ENCODE measurements at regions of chr5 and their contacts with region 1.

Region 1: GRCh38 chr5:57137401-57137800 is 36.5 kb upstream of the GPBP1 start:
- DNase-seq: no peak
- ATAC-seq: no peak
- H3K4me3 ChIP-seq: no peak overlapping the region
- H3K4me3 Mint-ChIP-seq: no peak overlapping the region
- H3K27ac ChIP-seq: no peak overlapping the region
- H3K27ac Mint-ChIP-seq: peak overlapping the region in 1 of 9 donors; percentile 4
- H3K4me1 ChIP-seq: no peaks in the 10 kb centered on the region
- H3K4me1 Mint-ChIP-seq: no peaks in the 10 kb centered on the region
- H3K27me3 ChIP-seq: no peaks in the 10 kb centered on the region
- H3K27me3 Mint-ChIP-seq: peaks cover 0 to 41% (median 0%) of the 10 kb centered on the region in 5 donors

Region 2: DNA sequence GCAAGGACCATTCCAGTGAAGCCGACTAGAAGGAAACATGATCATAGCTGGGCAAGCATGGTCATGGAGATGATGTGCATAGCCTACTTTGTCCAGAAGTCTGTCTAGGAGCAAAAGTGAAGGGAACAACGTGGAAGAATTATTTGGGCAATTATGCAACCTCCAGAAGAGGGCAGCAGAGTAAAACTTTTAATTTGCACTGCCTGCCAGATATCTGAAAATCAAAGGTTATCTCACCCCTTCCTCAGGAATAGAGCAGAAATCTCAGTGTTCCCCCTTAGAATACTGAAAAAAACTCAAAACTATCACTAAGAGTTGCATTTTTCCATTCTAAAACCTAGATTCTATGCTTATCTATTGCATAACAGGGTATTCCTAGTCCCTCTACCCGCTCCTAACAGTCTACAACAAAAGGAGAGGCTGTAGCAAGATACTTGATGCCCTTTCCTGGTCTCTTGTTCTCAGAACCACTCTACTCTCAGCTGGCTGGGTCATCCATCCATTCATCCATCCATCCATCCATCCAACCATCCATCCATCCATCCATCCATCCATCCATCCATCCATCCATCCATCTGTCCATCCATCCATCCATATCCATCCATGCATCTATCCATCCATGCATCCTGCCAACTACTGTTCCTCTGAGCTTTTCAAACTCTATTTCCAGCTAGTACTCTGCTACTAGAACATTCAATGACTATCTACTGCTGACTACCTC is 236.4 kb before region 1 on chr5:
- CTCF ChIA-PET with region 1: interaction called, 17 read pairs
- POLR2A ChIA-PET with region 1: interaction called, 3 read pairs
- intact Hi-C with region 1: loop called (anchors 1 kb)
- DNase-seq: peak in 7 of 9 donors; percentile 20 to 62 (median 51)
- ATAC-seq: peak; percentile 81
- H3K4me3 ChIP-seq: no peak overlapping the region
- H3K4me3 Mint-ChIP-seq: no peak overlapping the region
- H3K27ac ChIP-seq: no peak overlapping the region
- H3K27ac Mint-ChIP-seq: no peak overlapping the region
- H3K4me1 ChIP-seq: no peaks in the 10 kb centered on the region
- H3K4me1 Mint-ChIP-seq: peaks cover 0 to 6% (median 0%) of the 10 kb centered on the region in 7 donors
- H3K27me3 ChIP-seq: no peaks in the 10 kb centered on the region
- H3K27me3 Mint-ChIP-seq: peaks cover 0 to 15% (median 0%) of the 10 kb centered on the region in 5 donors

Region 3: GRCh38 chr5:56951946-56952691 is 185.3 kb before region 1 on chr5 and contains the start of gene MIER3:
- CTCF ChIA-PET with region 1: interaction called, 3 read pairs
- POLR2A ChIA-PET with region 1: no interaction called
- intact Hi-C with region 1: loop called in 1 of 2 experiments (anchors 1 kb)
- DNase-seq: peak; percentile 66 to 87 (median 80)
- ATAC-seq: peak; percentile 94
- H3K4me3 ChIP-seq: peak within 1 kb of the TSS; percentile 75
- H3K4me3 Mint-ChIP-seq: peak within 1 kb of the TSS; percentile 89 to 98 (median 96)
- H3K27ac ChIP-seq: peak within 1 kb of the TSS; percentile 73
- H3K27ac Mint-ChIP-seq: peak within 1 kb of the TSS in 8 of 9 donors; percentile 84 to 95 (median 88)
- H3K4me1 ChIP-seq: peaks cover 6 to 10% of the 10 kb centered on the region in 2 donors
- H3K4me1 Mint-ChIP-seq: peaks cover 18 to 32% (median 22%) of the 10 kb centered on the region in 7 donors
- H3K27me3 ChIP-seq: peaks cover 0 to 5% of the 10 kb centered on the region in 2 donors
- H3K27me3 Mint-ChIP-seq: peaks cover 10 to 45% (median 24%) of the 10 kb centered on the region in 5 donors
- total RNA-seq, gene MIER3: 14.9 to 35.0 (median 26.2) TPM

Region 4: GRCh38 chr5:57117596-57117995 is 19.8 kb before region 1 on chr5:
- CTCF ChIA-PET with region 1: interaction called, 3 read pairs
- POLR2A ChIA-PET with region 1: no interaction called
- intact Hi-C with region 1: loop called in 1 of 2 experiments (anchors 1 kb)
- DNase-seq: peak in 7 of 9 donors; percentile 5 to 66 (median 25)
- ATAC-seq: peak; percentile 91
- H3K4me3 ChIP-seq: no peak overlapping the region
- H3K4me3 Mint-ChIP-seq: peak overlapping the region in 2 of 10 donors; percentile 7 to 65
- H3K27ac ChIP-seq: no peak overlapping the region
- H3K27ac Mint-ChIP-seq: peak overlapping the region in 6 of 9 donors; percentile 38 to 88 (median 56)
- H3K4me1 ChIP-seq: no peaks in the 10 kb centered on the region
- H3K4me1 Mint-ChIP-seq: peaks cover 0 to 27% (median 0%) of the 10 kb centered on the region in 7 donors
- H3K27me3 ChIP-seq: no peaks in the 10 kb centered on the region
- H3K27me3 Mint-ChIP-seq: peaks cover 0 to 3% (median 0%) of the 10 kb centered on the region in 5 donors

Region 5: GRCh38 chr5:57221049-57221568 is 83.7 kb after region 1 on chr5:
- CTCF ChIA-PET with region 1: interaction called, 15 read pairs
- POLR2A ChIA-PET with region 1: interaction called, 6 read pairs
- intact Hi-C with region 1: loop called (anchors 1 kb)
- DNase-seq: peak in 7 of 9 donors; percentile 41 to 79 (median 73)
- ATAC-seq: peak; percentile 86
- H3K4me3 ChIP-seq: no peak overlapping the region
- H3K4me3 Mint-ChIP-seq: peak overlapping the region in 1 of 10 donors; percentile 30
- H3K27ac ChIP-seq: no peak overlapping the region
- H3K27ac Mint-ChIP-seq: peak overlapping the region in 8 of 9 donors; percentile 19 to 87 (median 76)
- H3K4me1 ChIP-seq: peaks cover 4 to 7% of the 10 kb centered on the region in 2 donors
- H3K4me1 Mint-ChIP-seq: peaks cover 3 to 62% (median 41%) of the 10 kb centered on the region in 7 donors
- H3K27me3 ChIP-seq: no peaks in the 10 kb centered on the region
- H3K27me3 Mint-ChIP-seq: no peaks in the 10 kb centered on the region

Measured in naive thymus-derived CD4-positive, alpha-beta T cell (primary cell).